ENCODE measurements at regions of chr6 and their contacts with region 1.

Region 1: DNA sequence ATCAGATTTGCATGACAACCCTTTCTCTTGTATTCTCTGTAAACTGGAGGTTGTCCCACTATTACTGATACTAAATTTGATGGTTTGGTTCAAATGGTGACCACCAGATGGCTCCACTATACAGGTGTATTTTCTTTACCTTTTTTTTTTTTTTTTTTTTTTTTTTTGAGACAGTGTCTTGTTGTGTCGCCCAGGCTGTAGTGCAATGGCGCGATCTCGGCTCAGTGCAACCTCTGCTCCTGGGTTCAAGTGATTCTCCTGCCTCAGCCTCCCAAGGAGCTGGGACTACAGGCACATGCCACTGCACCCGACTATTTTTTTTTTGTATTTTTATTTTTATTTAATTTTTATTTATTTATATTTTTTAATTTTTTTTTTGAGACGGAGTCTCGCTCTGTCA is 6.6 kb upstream of the WTAP start:
- DNase-seq: peak; percentile 67
- H3K4me3 Mint-ChIP-seq: no peak overlapping the region
- H3K27ac Mint-ChIP-seq: no peak overlapping the region
- H3K4me1 Mint-ChIP-seq: peaks cover 37% of the 10 kb centered on the region
- H3K27me3 Mint-ChIP-seq: no peaks in the 10 kb centered on the region

Region 2: DNA sequence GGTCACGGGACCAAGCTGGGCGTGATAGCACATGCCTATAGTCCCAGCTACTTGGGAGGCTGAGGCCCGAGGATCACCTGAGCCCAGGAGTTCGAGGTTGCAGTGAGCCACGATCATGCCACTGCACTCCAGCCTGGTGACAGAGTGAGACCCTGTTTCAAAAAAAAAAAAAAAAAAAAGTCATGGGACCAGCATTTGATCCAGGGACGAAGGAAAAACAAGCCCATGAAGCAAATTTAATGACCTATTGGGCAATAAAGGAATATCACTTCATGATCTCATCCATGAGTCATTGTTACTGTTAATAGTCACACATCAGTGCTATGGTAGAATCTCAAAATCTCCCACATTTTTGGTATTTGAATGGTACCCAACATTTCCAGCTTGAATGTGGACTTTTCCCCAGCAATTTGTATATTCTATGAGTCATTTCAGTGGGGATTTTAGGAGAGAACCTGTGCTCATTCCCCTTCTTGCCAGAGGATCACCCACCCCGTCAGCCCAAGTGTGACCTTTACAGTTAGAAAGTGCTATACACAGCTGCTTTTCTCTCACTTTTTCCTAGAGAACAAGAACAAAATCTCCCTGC is 19.2 kb before region 1 on chr6:
- CTCF ChIA-PET with region 1: interaction called, 4 read pairs
- intact Hi-C with region 1: loop called (anchors 1 kb)
- DNase-seq: peak; percentile 47
- H3K4me3 Mint-ChIP-seq: no peak overlapping the region
- H3K27ac Mint-ChIP-seq: peak overlapping the region; percentile 87
- H3K4me1 Mint-ChIP-seq: peaks cover 14% of the 10 kb centered on the region
- H3K27me3 Mint-ChIP-seq: no peaks in the 10 kb centered on the region

Region 3: GRCh38 chr6:159829526-159829925 is 108.8 kb after region 1 on chr6:
- CTCF ChIA-PET with region 1: no interaction called
- intact Hi-C with region 1: no loop called
- DNase-seq: no peak
- H3K4me3 Mint-ChIP-seq: no peak overlapping the region
- H3K27ac Mint-ChIP-seq: no peak overlapping the region
- H3K4me1 Mint-ChIP-seq: peaks cover 11% of the 10 kb centered on the region
- H3K27me3 Mint-ChIP-seq: no peaks in the 10 kb centered on the region

Region 4: GRCh38 chr6:159852877-159853276 is 132.2 kb after region 1 on chr6:
- CTCF ChIA-PET with region 1: interaction called, 3 read pairs
- intact Hi-C with region 1: loop called (anchors 1 kb)
- DNase-seq: peak; percentile 31
- H3K4me3 Mint-ChIP-seq: no peak overlapping the region
- H3K27ac Mint-ChIP-seq: no peak overlapping the region
- H3K4me1 Mint-ChIP-seq: no peaks in the 10 kb centered on the region
- H3K27me3 Mint-ChIP-seq: no peaks in the 10 kb centered on the region

Region 5: DNA sequence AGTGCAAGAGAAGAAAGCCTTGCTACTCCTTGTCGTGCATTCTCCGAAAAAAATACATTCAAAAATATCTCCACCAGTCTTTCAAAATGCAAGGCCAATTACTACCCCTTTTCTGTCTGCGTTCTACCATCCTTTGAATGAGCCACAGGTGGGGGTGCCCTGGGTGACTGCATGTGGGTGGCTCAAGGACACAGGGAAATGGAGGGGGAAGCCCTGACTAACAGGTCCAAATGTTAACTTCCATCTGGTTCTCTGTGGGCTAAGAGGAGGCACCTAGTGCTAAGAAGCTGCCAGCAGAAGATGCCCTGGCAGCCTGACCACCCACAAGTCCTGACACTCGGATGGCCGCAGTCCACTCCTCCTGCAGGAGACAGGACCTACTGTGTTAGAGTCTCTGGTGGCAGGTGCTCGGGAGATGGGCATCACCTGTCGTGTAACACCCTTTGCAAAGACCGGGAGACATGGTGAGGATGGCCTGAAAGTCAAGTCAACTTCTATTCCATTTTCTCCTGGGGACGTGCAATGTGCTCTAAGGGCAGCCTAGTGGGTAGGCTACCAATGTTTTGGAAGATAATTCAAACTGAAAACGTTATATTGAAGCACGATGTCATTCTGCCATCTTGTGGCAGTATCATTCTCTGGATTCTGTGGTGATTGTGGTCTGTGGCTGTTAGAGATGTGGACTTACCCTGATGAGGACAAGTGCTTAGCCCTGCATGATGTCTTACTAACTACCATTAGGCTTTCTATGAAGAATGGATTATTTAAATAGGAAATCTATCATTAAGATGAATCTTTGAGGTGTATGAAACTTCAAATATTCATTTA is 220.8 kb after region 1 on chr6:
- CTCF ChIA-PET with region 1: no interaction called
- intact Hi-C with region 1: loop called (anchors 1 kb)
- DNase-seq: peak; percentile 55
- H3K4me3 Mint-ChIP-seq: no peak overlapping the region
- H3K27ac Mint-ChIP-seq: no peak overlapping the region
- H3K4me1 Mint-ChIP-seq: peaks cover 5% of the 10 kb centered on the region
- H3K27me3 Mint-ChIP-seq: peaks cover under 1% of the 10 kb centered on the region

Region 6: DNA sequence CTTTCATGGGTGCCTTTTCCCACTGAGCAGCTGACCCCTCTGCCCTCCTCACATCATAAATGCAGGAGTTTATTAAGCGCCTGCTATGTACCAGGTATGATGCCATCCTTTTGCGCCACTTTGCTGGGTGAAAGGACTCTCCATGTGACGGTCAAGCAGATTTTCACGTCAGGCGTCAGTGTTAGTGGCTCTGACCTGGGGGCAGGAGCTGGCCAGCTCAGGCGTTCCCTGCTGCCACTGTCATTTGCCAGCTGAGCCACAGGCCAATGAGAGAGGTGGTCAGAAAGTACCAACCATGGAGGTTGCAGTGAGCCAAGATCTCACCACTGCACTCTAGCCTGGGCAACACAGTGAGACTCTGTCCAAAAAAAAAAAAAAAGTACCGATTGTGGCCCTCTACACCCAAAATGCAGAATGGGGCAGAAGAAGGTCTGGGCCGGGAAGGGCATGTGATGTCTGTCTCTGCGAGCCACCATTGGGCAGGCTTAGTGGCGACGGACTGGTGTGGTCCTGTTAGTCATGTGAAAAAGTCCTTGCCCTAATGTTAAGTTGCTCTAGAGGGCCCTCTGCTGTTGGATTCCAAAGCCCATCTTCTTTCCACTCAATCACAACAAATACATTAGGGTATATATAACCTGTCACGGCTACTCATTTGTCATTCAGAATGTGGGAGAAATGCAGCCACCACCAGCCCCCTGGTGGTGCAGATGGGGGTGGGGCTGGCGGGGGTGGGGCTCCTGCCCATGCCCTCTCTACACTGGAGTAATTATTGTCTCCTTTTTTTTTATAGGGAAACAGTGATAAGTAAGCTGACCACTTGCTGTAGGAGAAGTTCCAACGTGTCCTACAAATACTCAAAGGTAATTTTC is 382.5 kb after region 1 on chr6:
- CTCF ChIA-PET with region 1: no interaction called
- intact Hi-C with region 1: loop called (anchors 2 kb)
- DNase-seq: peak; percentile 45
- H3K4me3 Mint-ChIP-seq: no peak overlapping the region
- H3K27ac Mint-ChIP-seq: no peak overlapping the region
- H3K4me1 Mint-ChIP-seq: peaks cover 24% of the 10 kb centered on the region
- H3K27me3 Mint-ChIP-seq: no peaks in the 10 kb centered on the region

Measured in activated naive CD4-positive, alpha-beta T cell treated with anti-CD3 and anti-CD28 coated beads for 36 hours (primary cell).